ENCODE measurements at regions of chr1 and their contacts with region 1.

Region 1: GRCh38 chr1:201877877-201878401 is 10.8 kb upstream of the SHISA4 start:
- DNase-seq: peak; percentile 57
- H3K4me3 Mint-ChIP-seq: no peak overlapping the region
- H3K27ac Mint-ChIP-seq: peak overlapping the region; percentile 18
- H3K4me1 Mint-ChIP-seq: no peaks in the 10 kb centered on the region
- H3K27me3 Mint-ChIP-seq: no peaks in the 10 kb centered on the region

Region 2: DNA sequence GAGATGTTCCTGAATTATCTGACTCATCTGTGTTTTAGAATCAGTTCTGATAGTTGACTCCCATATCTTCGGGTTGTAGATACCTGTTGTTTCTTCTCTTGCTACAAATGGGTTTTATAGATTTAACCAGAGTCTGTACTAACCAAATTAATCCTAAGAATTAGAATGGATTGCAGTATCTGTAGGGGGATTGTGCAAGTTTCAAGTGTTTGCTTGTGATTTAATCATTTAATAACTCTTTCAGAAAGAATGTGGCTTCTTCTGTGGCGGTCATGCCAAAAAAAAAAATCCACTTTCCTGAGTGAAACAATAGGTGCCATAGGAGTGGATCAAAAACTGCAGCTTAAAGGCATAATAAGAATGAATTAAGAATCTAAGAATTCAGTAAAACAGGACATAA is 39.6 kb before region 1 on chr1:
- CTCF ChIA-PET with region 1: no interaction called
- intact Hi-C with region 1: no loop called
- DNase-seq: no peak
- H3K4me3 Mint-ChIP-seq: no peak overlapping the region
- H3K27ac Mint-ChIP-seq: no peak overlapping the region
- H3K4me1 Mint-ChIP-seq: peaks cover 43% of the 10 kb centered on the region
- H3K27me3 Mint-ChIP-seq: no peaks in the 10 kb centered on the region

Region 3: GRCh38 chr1:201850053-201850397 is 27.9 kb before region 1 on chr1:
- CTCF ChIA-PET with region 1: interaction called, 14 read pairs
- intact Hi-C with region 1: no loop called
- DNase-seq: no peak
- H3K4me3 Mint-ChIP-seq: no peak overlapping the region
- H3K27ac Mint-ChIP-seq: no peak overlapping the region
- H3K4me1 Mint-ChIP-seq: peaks cover 20% of the 10 kb centered on the region
- H3K27me3 Mint-ChIP-seq: no peaks in the 10 kb centered on the region

Region 4: GRCh38 chr1:201970334-201971159 is 92.6 kb after region 1 on chr1:
- CTCF ChIA-PET with region 1: interaction called, 16 read pairs
- intact Hi-C with region 1: loop called (anchors 1 kb)
- DNase-seq: no peak
- H3K4me3 Mint-ChIP-seq: no peak overlapping the region
- H3K27ac Mint-ChIP-seq: no peak overlapping the region
- H3K4me1 Mint-ChIP-seq: no peaks in the 10 kb centered on the region
- H3K27me3 Mint-ChIP-seq: no peaks in the 10 kb centered on the region

Region 5: GRCh38 chr1:202167708-202168415 is 289.9 kb after region 1 on chr1:
- CTCF ChIA-PET with region 1: no interaction called
- intact Hi-C with region 1: no loop called
- DNase-seq: no peak
- H3K4me3 Mint-ChIP-seq: no peak overlapping the region
- H3K27ac Mint-ChIP-seq: no peak overlapping the region
- H3K4me1 Mint-ChIP-seq: peaks cover 32% of the 10 kb centered on the region
- H3K27me3 Mint-ChIP-seq: no peaks in the 10 kb centered on the region